Activated CD4-positive, alpha-beta T cell treated with anti-CD3 and anti-CD28 coated beads for 36 hours (primary cell): ENCODE measurements at regions of chr20 and their contacts with region 1.

Region 1: DNA sequence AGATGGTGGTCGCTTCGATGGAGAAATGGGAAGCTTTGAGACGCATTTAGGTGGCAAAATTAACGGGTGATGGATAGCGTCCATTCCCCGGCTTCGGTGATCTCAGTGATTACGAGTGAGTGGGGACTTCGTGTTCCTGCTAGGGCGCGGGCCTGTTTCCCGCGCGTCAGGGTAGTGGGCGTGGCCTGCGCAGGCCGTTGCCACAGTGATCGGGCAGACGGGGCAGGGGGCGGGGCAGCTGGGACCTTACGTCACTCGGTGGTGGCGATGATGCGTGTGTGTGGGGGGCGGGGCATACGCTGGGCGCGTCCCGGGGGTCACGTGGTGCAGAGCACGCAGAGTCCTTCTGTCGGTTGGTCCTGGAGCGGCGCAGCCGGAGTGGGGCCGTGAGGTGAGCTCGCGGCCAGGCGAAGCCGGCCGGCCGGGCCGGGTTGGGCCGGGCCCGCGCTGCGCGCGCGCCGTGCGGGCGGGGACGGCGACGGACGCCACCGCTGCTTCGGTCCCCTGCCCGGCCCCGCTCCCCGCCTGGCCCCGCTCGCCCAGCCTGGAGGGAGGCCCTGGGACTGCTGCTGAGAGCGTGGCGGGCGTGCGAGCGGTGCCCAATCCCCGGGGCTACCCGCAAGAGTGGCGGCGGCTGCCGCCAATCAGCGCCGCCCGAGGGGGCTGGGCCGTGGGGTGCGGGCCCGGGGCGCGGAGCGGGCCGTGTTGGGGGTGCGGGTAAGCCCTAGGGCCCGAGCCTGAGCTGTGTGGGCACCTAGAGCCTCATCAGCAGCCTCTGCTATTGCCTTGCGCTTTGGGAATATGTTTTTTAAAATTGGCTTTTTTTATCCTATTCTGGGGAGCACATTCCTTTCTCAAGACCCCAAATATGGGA is at the start of gene PHF20:
- DNase-seq: peak; percentile 100
- ATAC-seq: peak; percentile 91
- H3K4me3 Mint-ChIP-seq: peak within 1 kb of the TSS; percentile 81
- H3K27ac Mint-ChIP-seq: peak within 1 kb of the TSS; percentile 94
- H3K4me1 Mint-ChIP-seq: peaks cover 76% of the 10 kb centered on the region
- H3K27me3 Mint-ChIP-seq: no peaks in the 10 kb centered on the region
- total RNA-seq, gene PHF20: 54.3 to 61.6 TPM

Region 2: GRCh38 chr20:35664544-35665221 is 107.2 kb before region 1 on chr20 and contains the starts of genes CPNE1 and RBM12:
- CTCF ChIA-PET with region 1: interaction called, 3 read pairs
- POLR2A ChIA-PET with region 1: no interaction called
- intact Hi-C with region 1: loop called in 1 of 2 experiments (anchors 1 kb)
- DNase-seq: peak; percentile 96
- ATAC-seq: peak; percentile 68
- H3K4me3 Mint-ChIP-seq: peak within 1 kb of the TSS; percentile 80
- H3K27ac Mint-ChIP-seq: peak within 1 kb of the TSS; percentile 100
- H3K4me1 Mint-ChIP-seq: peaks cover 36% of the 10 kb centered on the region
- H3K27me3 Mint-ChIP-seq: no peaks in the 10 kb centered on the region
- total RNA-seq, gene CPNE1: 249 to 258 TPM
- total RNA-seq, gene RBM12: 122 to 148 TPM

Region 3: GRCh38 chr20:35757098-35757705 is 14.7 kb before region 1 on chr20:
- CTCF ChIA-PET with region 1: interaction called, 3 read pairs
- POLR2A ChIA-PET with region 1: interaction called, 13 read pairs
- intact Hi-C with region 1: no loop called
- DNase-seq: no peak
- ATAC-seq: peak; percentile 61
- H3K4me3 Mint-ChIP-seq: no peak overlapping the region
- H3K27ac Mint-ChIP-seq: no peak overlapping the region
- H3K4me1 Mint-ChIP-seq: peaks cover 6% of the 10 kb centered on the region
- H3K27me3 Mint-ChIP-seq: no peaks in the 10 kb centered on the region

Region 4: DNA sequence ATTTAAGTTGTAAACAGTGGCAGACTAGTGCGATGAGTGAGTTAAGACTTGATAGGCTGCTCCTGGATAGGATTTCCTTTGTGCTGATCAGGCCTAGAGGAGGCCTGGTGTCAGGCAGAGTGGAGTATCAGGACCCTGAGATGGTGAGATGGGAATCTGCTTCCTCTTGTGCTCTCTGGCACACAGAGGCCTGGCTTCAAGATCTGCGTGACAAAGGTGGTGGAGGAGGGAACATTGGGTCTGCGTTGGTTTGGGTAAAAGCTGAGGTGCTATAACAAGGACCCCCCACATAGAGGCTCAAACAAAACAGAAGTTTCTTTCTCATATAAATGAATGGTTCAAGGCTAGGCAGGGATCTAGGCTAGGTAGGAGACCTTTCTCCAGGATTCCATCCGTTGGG is 162.1 kb after region 1 on chr20:
- CTCF ChIA-PET with region 1: no interaction called
- POLR2A ChIA-PET with region 1: no interaction called
- intact Hi-C with region 1: no loop called
- DNase-seq: no peak
- ATAC-seq: no peak
- H3K4me3 Mint-ChIP-seq: no peak overlapping the region
- H3K27ac Mint-ChIP-seq: no peak overlapping the region
- H3K4me1 Mint-ChIP-seq: peaks cover 7% of the 10 kb centered on the region
- H3K27me3 Mint-ChIP-seq: no peaks in the 10 kb centered on the region